Activated CD4-positive, alpha-beta memory T cell treated with anti-CD3 and anti-CD28 coated beads for 36 hours (primary cell): ENCODE measurements at regions of chr13 and their contacts with region 1.

Region 1: DNA sequence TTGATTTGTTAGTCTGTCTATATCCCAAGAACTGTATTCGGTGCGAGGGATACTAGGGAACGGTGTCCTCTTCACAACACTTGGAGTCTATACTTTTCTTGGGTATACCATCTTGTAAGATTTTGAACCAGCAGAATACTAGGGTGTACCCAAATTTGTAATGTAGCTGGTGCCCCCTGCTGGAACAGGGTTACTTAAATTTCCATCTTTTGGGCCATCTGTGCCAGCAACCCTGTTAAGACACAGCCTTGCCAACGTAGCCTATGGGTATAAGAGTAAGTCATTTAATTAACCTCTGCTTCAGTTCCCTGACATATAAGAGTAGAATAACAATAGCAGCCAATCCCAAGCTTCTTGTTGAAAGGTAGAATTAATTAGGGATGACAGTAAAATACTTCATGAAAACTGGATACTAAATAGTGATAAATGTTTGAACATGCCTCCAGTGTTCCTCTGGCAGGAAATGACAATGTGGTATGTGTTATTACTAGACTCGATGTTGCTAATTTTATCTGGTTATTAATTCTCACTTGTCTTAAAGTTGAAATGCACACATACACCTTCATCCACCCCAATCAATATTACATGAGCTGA is 607.6 kb downstream of the FGF9 start:
- DNase-seq: peak; percentile 75
- H3K4me3 Mint-ChIP-seq: no peak overlapping the region
- H3K27ac Mint-ChIP-seq: no peak overlapping the region
- H3K4me1 Mint-ChIP-seq: no peaks in the 10 kb centered on the region
- H3K27me3 Mint-ChIP-seq: no peaks in the 10 kb centered on the region

Region 2: DNA sequence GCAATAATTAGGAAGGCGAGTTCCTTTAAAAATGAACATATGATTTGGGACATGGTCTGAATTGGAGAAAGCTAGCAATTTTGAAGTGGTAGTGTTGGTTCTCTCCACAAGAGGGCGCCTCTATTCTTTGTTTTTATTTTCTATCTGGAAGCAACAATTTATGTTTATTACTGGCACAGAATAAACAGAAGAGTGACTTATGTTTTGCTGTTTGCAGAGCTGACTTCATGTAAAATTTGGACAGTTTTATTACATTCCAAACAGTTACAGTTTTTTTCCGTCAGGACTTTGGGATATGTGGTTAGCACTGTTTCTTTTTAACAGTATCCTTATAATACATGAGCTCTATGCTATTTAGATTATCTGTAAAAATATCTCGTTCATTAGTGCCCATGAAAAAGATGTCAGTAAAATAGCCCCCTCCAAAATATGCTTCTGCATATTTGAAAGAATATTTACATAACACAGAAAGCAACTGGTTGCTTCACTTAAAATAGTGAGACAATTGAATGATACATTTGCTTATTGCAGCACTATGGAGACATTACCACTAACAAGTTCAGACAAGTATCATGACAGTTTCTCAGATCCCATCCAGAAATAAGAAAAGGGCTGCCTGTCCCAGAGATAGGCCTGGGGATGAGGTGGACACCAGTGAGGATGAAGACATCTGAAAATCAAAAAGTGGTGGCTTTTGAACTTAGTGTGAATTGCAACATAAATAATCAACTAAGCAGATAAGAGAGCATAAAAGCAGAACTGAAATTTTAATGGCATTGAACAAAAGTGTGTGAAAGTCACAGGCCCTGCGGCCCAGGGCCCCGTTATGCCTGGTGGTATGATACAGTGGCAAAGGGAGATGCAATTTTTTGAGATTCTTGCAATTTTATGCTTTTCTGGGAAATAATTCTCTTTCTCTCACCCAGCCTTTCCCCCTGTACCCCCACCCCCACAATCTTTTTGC is 639.8 kb before region 1 on chr13:
- CTCF ChIA-PET with region 1: interaction called, 22 read pairs
- POLR2A ChIA-PET with region 1: no interaction called
- intact Hi-C with region 1: loop called (anchors 1 kb)
- DNase-seq: peak; percentile 15
- H3K4me3 Mint-ChIP-seq: no peak overlapping the region
- H3K27ac Mint-ChIP-seq: no peak overlapping the region
- H3K4me1 Mint-ChIP-seq: peaks cover 2% of the 10 kb centered on the region
- H3K27me3 Mint-ChIP-seq: peaks cover 3% of the 10 kb centered on the region

Region 3: GRCh38 chr13:21849323-21849722 is 429.1 kb before region 1 on chr13:
- CTCF ChIA-PET with region 1: interaction called, 7 read pairs
- POLR2A ChIA-PET with region 1: no interaction called
- intact Hi-C with region 1: loop called (anchors 1 kb)
- DNase-seq: peak; percentile 12
- H3K4me3 Mint-ChIP-seq: no peak overlapping the region
- H3K27ac Mint-ChIP-seq: no peak overlapping the region
- H3K4me1 Mint-ChIP-seq: peaks cover 1% of the 10 kb centered on the region
- H3K27me3 Mint-ChIP-seq: peaks cover 2% of the 10 kb centered on the region

Region 4: DNA sequence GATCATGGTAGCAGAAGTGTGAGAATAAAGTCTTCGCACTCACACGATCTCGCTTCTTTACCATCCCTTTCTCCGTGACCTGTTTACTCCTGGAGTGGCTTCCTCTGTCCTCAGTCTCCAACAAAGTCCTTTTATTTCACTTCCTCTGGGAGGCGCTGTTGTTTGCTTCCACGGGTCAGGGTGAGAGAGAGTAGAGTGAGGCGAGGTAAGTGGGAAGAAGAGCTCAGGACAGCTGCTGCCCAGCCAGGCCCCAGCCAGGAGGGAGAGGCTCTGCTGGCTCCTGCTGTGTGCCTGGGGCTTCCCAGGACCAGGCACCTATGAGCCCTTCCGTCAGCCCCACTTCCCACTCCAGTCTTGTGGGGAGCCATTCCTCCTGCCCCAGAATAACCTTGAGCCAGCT is 365.4 kb before region 1 on chr13:
- CTCF ChIA-PET with region 1: interaction called, 3 read pairs
- POLR2A ChIA-PET with region 1: no interaction called
- intact Hi-C with region 1: loop called (anchors 5 kb)
- DNase-seq: peak; percentile 22
- H3K4me3 Mint-ChIP-seq: no peak overlapping the region
- H3K27ac Mint-ChIP-seq: no peak overlapping the region
- H3K4me1 Mint-ChIP-seq: no peaks in the 10 kb centered on the region
- H3K27me3 Mint-ChIP-seq: no peaks in the 10 kb centered on the region

Region 5: GRCh38 chr13:23105051-23105450 is 826.6 kb after region 1 on chr13:
- CTCF ChIA-PET with region 1: no interaction called
- POLR2A ChIA-PET with region 1: no interaction called
- intact Hi-C with region 1: no loop called
- DNase-seq: no peak
- H3K4me3 Mint-ChIP-seq: no peak overlapping the region
- H3K27ac Mint-ChIP-seq: no peak overlapping the region
- H3K4me1 Mint-ChIP-seq: no peaks in the 10 kb centered on the region
- H3K27me3 Mint-ChIP-seq: peaks cover 7% of the 10 kb centered on the region